ENCODE measurements at regions of chr1 and their contacts with region 1.

Region 1: DNA sequence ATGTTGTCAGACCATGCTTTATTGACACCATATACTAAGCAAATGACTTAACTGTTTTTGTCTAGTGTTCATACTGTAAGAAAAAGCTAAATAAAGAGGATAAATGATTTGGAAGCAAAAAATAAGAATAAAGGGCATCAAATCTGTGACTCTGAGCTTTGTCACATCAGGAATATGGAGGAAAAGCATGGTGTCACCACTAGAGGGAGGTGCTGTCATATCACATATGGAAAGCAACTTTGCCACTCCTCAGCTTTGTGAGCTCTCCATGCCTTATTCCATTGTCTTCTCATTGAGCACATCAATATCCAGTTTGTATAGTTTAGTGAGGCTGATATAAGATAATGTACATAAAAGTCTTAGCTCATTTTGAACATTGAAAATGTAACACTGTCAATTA is 20.8 kb upstream of the GBP1 start:
- DNase-seq: no peak
- ATAC-seq: no peak
- H3K4me3 ChIP-seq: no peak overlapping the region
- H3K27ac ChIP-seq: no peak overlapping the region
- H3K4me1 ChIP-seq: no peaks in the 10 kb centered on the region
- H3K27me3 ChIP-seq: no peaks in the 10 kb centered on the region

Region 2: GRCh38 chr1:89142160-89142559 is 56.4 kb after region 1 on chr1:
- intact Hi-C with region 1: no loop called
- DNase-seq: no peak
- ATAC-seq: no peak
- H3K4me3 ChIP-seq: no peak overlapping the region
- H3K27ac ChIP-seq: no peak overlapping the region
- H3K4me1 ChIP-seq: no peaks in the 10 kb centered on the region
- H3K27me3 ChIP-seq: no peaks in the 10 kb centered on the region

Region 3: DNA sequence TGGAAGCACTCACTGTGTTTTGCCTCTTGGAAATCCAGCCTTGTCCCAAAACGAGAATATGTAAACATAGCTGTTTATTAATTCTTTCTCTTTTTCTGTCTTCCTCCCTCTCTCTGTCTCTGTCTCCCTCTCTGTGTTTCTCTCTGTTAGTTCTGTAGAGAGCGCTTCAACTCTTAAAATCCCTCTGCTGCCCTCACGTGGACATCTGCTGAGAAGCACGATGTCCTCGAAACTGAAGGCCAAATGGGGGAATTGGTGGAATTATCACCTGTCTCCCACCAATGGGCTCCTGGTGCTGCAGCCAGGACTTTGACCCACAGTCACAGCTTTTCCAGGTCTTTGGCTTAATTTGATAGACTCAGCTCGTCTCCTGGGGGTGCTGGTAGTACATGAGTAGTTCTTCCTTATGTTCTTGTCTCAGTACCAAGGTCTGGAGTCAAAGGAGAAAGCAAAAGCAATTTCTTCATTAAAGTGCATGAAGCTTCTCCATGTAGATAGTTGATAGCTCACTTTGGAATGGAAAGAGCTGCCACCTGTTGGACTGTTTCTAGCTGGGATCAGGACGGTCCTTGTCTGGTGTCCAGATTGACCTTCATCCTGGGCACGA is 272.6 kb after region 1 on chr1:
- intact Hi-C with region 1: loop called in 1 of 2 experiments (anchors 10 kb)
- DNase-seq: peak; percentile 82 to 89
- ATAC-seq: peak; percentile 90
- H3K4me3 ChIP-seq: no peak overlapping the region
- H3K27ac ChIP-seq: no peak overlapping the region
- H3K4me1 ChIP-seq: no peaks in the 10 kb centered on the region
- H3K27me3 ChIP-seq: no peaks in the 10 kb centered on the region

Region 4: DNA sequence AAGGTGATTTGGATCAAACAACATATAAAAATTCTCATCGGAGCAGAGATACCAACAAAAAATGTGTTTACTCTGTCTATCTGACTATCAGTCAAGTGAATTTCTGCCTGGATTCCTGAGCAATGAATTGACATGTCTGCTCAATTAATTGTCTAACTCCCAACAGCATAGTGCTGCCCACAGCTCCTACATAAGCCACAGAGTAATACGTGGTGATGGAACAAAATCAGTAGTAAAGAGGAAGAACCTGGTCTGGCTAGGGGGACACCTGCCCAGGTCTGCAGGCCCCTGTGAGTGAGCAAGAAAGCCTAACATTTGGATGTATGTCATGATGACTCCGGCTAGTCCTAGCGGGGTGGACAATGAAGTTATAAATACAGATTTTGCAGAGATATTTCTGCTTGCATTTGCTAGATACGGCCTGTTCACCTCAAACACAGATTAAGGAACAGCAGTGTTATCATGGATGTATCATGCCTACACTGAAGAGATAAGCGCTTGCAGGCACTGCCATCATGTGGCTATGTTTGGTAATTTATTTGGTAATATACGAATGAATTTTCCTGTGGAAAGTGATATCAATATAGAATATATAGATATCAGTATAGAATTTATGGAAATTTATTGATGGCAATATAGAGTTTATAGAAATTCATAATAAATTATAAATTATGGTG is 369.2 kb after region 1 on chr1:
- intact Hi-C with region 1: loop called in 1 of 2 experiments (anchors 10 kb)
- DNase-seq: no peak
- ATAC-seq: no peak
- H3K4me3 ChIP-seq: no peak overlapping the region
- H3K27ac ChIP-seq: no peak overlapping the region
- H3K4me1 ChIP-seq: no peaks in the 10 kb centered on the region
- H3K27me3 ChIP-seq: no peaks in the 10 kb centered on the region